Right ventricle myocardium superior (tissue), 1 donor: ENCODE measurements at regions of chr3 and their contacts with region 1.

Region 1: DNA sequence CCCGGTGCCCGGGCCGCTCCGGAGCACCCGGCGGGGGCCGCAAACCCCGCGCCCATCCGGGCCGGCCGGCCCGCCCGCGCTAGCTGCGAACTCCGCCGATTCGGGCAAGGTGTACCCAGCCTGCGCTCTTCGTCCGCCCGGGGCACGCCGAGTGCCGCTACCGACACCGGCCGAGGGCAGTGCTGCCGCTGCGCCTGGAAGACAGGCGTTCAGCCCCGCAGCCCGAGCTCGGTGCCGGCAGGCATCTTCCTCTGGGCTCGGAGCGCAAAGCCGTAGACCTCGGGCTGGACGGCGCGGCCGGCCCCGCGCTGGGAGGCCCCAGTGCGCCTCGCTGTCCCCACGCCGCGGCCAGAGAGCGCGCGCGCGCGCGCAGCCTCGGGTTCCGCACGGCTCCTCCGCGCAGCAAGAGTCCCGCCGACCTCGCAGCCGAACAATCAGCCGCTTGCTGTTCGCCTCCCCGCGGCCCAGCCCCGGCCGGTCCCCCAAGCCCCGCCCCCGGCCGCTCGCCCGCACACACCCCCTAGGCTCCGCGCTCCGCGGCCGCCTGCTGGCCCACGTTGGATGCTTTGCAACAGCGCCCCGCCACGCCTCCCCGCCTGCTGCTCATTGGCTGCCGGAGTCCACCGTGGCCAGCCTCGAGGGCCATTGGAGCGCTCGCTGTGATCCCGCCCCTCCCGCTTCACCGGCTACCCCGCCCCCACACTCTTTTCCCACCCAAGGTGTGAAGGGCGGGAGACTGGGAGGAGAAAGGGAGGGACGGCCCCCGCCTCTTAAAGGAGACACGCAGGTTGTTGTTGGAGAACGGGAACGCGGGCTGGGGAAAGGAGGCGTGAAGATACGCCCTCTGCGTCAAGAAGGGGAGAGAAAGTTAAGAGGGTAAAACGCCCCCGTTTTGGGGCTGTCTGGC is at the start of gene LRIG1:
- DNase-seq: peak; percentile 100
- ATAC-seq: peak; percentile 96
- total RNA-seq, gene LRIG1: 93.9 TPM

Region 2: GRCh38 chr3:65291448-65292105 is 1209.3 kb before region 1 on chr3:
- intact Hi-C with region 1: no loop called
- DNase-seq: no peak
- ATAC-seq: no peak

Region 3: GRCh38 chr3:66407611-66408218 is 93.1 kb before region 1 on chr3:
- intact Hi-C with region 1: loop called (anchors 5 kb)
- DNase-seq: peak; percentile 86
- ATAC-seq: peak; percentile 70

Region 4: GRCh38 chr3:66797889-66798560 is 297.2 kb after region 1 on chr3:
- intact Hi-C with region 1: no loop called
- DNase-seq: peak; percentile 61
- ATAC-seq: peak; percentile 67